K562 (cell line): ENCODE measurements at regions of chr9 and their contacts with region 1.

Region 1: DNA sequence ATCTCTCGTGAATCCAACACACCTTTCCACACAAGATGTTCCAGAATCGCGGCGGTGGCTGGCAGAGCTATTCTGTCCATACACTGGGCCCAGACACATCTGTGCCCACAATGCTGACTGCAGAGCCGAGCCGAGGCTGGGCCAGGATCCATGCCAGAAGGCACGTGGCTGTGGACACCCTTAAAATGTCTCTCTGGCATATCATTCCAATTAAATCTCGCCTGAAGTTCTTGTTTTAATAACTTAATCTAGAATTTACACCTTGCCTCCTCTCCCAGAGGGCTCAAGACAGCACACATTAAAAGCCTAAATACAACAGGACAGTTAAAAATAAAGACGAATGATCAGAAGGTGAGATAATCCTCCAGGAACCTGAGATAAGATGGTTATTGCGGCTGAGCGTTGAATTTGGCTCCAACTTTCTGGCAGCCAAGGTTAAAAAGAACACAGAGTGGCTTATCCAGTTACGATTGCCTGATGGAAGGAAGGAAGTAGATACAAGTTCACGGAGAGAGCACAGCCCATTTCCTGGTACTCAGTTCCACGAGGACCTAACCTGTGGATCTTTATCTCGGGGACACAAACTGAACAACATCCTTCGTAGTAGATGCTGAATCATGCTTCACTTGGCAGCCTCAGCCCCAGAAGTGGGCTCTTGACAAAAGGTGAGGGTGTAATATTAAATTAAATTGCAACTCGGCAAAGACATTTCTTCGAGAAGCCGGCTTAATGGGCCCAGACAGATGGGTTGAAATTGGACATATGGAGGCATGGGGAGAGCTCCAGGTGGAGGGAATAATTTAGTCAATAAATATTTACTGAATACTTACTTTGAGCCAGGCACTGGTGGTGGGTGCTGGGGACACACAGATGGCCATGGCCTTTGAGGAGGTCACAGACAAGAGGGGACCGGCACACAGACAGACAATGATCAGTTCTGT is 86.0 kb upstream of the TBC1D2 start:
- DNase-seq: peak; percentile 63 to 92 (median 74)
- ATAC-seq: peak; percentile 84
- H3K4me3 ChIP-seq: no peak overlapping the region; the same call in 1 of the 2 replicates
- H3K27ac ChIP-seq: peak overlapping the region; percentile 86
- H3K4me1 ChIP-seq: peaks cover 16 to 50% of the 10 kb centered on the region in 2 experiments
- H3K27me3 ChIP-seq: no peaks in the 10 kb centered on the region
- CTCF ChIP-seq: no peak
- EP300 ChIP-seq: peak; percentile 99
- POLR2A ChIP-seq: no peak
- RAD21 ChIP-seq: no peak; a peak in 1 of 4 replicates

Region 2: GRCh38 chr9:98374385-98375051 is 33.1 kb after region 1 on chr9:
- CTCF ChIA-PET with region 1: no interaction called
- POLR2A ChIA-PET with region 1: no interaction called
- in situ Hi-C with region 1: no loop called
- intact Hi-C with region 1: loop called (anchors 2 kb)
- DNase-seq: peak; percentile 90 to 97 (median 92)
- ATAC-seq: peak; percentile 88
- H3K4me3 ChIP-seq: no peak overlapping the region
- H3K27ac ChIP-seq: peak overlapping the region; percentile 56
- H3K4me1 ChIP-seq: peaks cover 38 to 53% of the 10 kb centered on the region in 2 experiments; a peak in 4 of 5 replicates
- H3K27me3 ChIP-seq: no peaks in the 10 kb centered on the region
- CTCF ChIP-seq: 0 out of 6 replicates have a peak, but pooled peaks of 1 of the 3 experiments have one; percentile 7
- EP300 ChIP-seq: peak; percentile 94
- POLR2A ChIP-seq: 0 out of 2 replicates have a peak, but pooled peaks have one; percentile 31
- RAD21 ChIP-seq: peak in 1 of 2 experiments; percentile 18; a peak in 1 of 4 replicates